ENCODE measurements at regions of chr7 and their contacts with region 1.

Region 1: DNA sequence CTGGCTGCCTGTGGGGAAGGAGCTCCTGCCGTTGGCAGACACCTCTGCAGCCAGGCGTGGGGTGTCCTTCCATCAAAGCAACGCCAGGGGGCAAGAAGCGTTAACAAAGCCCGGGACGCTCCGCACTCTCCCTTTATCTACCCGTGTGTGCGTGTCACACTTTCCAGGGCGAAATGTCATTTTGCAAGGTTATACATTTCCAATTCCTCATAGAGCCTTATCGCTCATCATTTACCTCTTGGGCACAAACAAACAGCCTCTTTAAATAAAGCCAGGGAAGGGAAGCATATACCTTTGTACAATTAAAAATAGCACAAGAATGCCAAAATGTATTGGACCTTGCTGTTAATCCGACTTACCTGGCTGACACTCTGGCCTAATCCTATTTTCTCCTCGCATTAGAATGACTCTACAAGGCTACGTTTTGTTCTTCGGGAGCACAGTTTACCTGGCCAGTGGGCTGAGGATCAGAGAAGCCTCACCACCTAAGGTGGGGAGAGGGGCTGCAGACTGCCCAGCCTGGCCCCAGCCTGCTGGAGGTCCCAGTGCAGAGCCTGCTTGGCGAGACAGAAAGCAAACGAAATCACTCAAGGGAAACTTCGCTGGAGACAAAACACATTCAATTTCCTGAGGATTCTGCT is 77.6 kb upstream of the EN2 start:
- DNase-seq: peak in 41 of 42 donors; percentile 17 to 86 (median 69)

Region 2: DNA sequence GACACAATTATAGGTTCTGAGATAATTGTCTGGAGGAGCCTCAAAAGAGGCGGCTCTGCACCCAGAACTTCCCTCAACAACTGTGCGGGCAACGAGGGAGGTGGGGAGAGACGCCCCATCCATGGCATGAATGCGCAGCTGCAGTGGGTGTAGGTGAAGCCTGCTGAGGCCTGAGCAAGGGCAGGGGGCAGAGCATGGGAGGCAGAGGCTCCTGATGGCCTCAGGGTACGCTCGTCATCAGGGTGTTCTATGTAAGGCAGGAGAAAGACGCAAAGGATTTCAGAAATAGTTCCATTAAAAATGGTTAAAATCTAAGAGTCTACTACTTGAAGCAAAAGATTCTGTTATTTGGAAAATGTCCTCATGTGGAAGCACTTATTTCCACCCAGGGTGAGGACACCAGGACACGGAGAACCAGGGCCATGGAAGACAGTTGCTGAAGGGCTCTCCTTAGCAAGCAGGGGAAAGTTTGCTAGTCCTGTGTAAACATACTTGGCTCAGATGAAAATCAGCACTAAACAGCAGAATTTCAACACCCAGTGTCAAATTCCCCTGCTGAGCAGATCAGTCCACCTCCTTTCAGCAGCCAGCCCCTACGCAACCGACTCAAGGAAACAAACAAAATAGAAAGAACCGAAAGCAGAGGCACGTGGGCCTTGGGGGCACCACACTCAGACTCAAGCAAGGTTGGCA is 63.8 kb before region 1 on chr7:
- intact Hi-C with region 1: no loop called
- DNase-seq: no peak

Region 3: GRCh38 chr7:155456738-155457564 is 76.6 kb after region 1 on chr7:
- intact Hi-C with region 1: loop called (anchors 2 kb)
- DNase-seq: peak; percentile 46 to 93 (median 80)

Region 4: DNA sequence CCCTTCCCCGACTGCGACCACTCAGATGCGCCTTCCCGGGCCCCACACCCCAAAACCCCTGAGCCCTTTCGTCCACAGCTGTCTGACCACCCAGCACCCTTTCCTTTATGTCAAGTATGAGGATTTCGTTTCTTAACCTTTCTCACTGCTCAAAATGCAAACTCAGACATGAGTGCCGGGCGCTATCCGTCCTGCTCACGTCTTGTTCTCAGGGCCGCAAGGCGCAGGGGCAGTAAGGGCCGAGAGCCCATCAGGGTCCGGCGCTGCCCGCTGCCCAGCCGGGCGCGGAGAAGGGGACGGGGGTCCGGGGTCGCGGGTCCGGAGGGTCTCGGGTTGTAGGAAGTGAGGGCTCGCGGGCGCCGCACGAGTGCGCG is 263.4 kb after region 1 on chr7:
- intact Hi-C with region 1: no loop called
- DNase-seq: peak in 1 of 42 donors; percentile 6

Measured in head of caudate nucleus (tissue), 42 donors.